Mammary epithelial cell (primary cell): ENCODE measurements at regions of chr3 and their contacts with region 1.

Region 1: GRCh38 chr3:9792405-9793160 is at the starts of genes ARPC4 and TADA3:
- DNase-seq: peak; percentile 93
- H3K4me3 ChIP-seq: peak within 1 kb of the TSS; percentile 73 to 80 (median 76)
- H3K27ac ChIP-seq: peak within 1 kb of the TSS; percentile 95
- H3K4me1 ChIP-seq: peaks cover 16% of the 10 kb centered on the region
- H3K27me3 ChIP-seq: no peaks in the 10 kb centered on the region
- CTCF ChIP-seq: no peak
- total RNA-seq, gene ARPC4: 135 to 202 TPM
- total RNA-seq, gene TADA3: 57.5 to 75.5 TPM

Region 2: GRCh38 chr3:8970971-8971589 is 821.5 kb before region 1 on chr3:
- CTCF ChIA-PET with region 1: no interaction called
- dilution Hi-C with region 1: no loop called
- in situ Hi-C with region 1: no loop called
- intact Hi-C with region 1: loop called (anchors 2 kb)
- DNase-seq: peak; percentile 48
- H3K4me3 ChIP-seq: no peak overlapping the region
- H3K27ac ChIP-seq: no peak overlapping the region
- H3K4me1 ChIP-seq: no peaks in the 10 kb centered on the region
- H3K27me3 ChIP-seq: no peaks in the 10 kb centered on the region
- CTCF ChIP-seq: peak; percentile 98 to 99

Region 3: GRCh38 chr3:9736831-9737230 is 55.8 kb before region 1 on chr3:
- CTCF ChIA-PET with region 1: no interaction called
- dilution Hi-C with region 1: no loop called
- in situ Hi-C with region 1: no loop called
- intact Hi-C with region 1: no loop called
- DNase-seq: no peak
- H3K4me3 ChIP-seq: no peak overlapping the region
- H3K27ac ChIP-seq: no peak overlapping the region
- H3K4me1 ChIP-seq: peaks cover 8% of the 10 kb centered on the region
- H3K27me3 ChIP-seq: no peaks in the 10 kb centered on the region
- CTCF ChIP-seq: no peak

Region 4: DNA sequence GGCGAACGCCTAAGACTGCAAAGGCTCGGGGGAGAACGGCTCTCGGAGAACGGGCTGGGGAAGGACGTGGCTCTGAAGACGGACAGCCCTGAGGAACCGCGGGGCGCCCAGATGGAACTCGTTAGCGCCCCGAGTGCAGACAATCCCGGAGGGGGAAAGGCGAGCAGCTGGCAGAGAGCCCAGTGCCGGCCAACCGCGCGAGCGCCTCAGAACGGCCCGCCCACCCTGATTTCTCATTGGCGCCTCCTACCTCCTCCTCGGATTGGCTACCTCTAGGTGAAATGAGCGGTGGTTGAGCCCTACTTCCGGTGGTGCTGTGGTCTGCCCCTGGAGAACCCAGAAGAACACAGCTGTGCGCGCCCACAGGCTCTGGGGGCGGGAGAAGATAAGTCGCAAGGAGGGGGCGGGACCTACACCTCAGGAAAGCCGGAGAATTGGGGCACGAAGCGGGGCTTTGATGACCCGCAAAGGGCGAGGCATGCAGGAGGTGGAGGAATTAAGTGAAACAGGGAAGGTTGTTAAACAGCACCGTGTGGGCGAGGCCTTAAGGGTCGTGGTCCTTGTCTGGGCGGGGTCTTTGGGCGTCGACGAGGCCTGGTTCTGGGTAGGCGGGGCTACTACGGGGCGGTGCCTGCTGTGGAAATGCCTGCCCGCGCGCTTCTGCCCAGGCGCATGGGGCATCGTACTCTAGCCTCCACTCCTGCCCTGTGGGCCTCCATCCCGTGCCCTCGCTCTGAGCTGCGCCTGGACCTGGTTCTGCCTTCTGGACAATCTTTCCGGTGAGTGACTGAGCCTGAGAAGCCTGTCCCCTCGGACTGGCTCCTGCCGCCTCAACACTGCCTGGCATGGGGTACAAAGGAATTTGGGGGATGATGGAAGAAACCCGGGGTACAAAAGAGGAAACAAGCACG is 42.7 kb before region 1 on chr3 and contains the start of gene OGG1:
- CTCF ChIA-PET with region 1: no interaction called
- dilution Hi-C with region 1: no loop called
- in situ Hi-C with region 1: no loop called
- intact Hi-C with region 1: loop called (anchors 1 kb)
- DNase-seq: peak; percentile 98
- H3K4me3 ChIP-seq: peak within 1 kb of the TSS; percentile 66 to 77 (median 69)
- H3K27ac ChIP-seq: peak within 1 kb of the TSS; percentile 45
- H3K4me1 ChIP-seq: peaks cover 20% of the 10 kb centered on the region
- H3K27me3 ChIP-seq: no peaks in the 10 kb centered on the region
- CTCF ChIP-seq: no peak
- total RNA-seq, gene OGG1: 17.5 to 19.2 TPM

Region 5: DNA sequence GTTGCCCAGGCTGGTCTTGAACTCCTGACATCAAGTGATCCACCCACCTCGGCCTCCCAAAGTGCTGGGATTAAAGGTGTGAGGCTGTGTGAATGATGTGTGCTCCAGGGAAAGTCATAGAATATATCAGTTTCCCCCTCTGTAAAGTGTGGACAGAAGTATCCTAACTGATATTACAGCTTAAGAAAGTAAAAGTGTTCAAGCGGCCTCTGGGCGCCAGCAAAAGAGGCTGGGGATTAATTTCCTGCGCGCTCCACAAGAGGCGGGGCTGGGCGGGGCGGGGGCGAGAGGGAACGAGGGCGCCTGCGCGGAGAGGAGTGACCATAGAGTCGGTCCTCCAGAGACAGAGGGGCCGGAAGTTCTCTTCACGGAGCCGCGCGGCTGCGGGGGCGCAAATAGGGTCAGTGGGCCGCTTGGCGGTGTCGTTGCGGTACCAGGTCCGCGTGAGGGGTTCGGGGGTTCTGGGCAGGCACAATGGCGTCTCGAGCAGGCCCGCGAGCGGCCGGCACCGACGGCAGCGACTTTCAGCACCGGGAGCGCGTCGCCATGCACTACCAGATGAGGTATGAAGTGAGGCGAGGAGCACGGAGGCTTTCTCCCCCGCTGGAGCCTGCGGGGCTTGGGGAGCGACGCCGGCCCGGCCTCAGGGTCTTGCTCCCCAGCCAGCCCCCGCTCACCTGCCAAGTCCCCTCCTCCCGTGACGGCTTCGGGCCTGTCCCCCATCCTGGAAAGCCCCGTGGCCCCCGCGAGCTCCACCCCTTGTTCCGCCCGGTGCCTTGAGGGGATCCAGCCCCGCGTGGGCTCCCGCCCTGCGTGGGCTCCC is 97.9 kb after region 1 on chr3 and contains the start of gene JAGN1:
- CTCF ChIA-PET with region 1: no interaction called
- dilution Hi-C with region 1: no loop called
- in situ Hi-C with region 1: no loop called
- intact Hi-C with region 1: no loop called
- DNase-seq: peak; percentile 84
- H3K4me3 ChIP-seq: peak within 1 kb of the TSS; percentile 65 to 96 (median 90)
- H3K27ac ChIP-seq: peak within 1 kb of the TSS; percentile 94
- H3K4me1 ChIP-seq: peaks cover 16% of the 10 kb centered on the region
- H3K27me3 ChIP-seq: no peaks in the 10 kb centered on the region
- CTCF ChIP-seq: no peak
- total RNA-seq, gene JAGN1: 32.3 to 34.7 TPM